ENCODE measurements at regions of chr12 and their contacts with region 1.

Region 1: DNA sequence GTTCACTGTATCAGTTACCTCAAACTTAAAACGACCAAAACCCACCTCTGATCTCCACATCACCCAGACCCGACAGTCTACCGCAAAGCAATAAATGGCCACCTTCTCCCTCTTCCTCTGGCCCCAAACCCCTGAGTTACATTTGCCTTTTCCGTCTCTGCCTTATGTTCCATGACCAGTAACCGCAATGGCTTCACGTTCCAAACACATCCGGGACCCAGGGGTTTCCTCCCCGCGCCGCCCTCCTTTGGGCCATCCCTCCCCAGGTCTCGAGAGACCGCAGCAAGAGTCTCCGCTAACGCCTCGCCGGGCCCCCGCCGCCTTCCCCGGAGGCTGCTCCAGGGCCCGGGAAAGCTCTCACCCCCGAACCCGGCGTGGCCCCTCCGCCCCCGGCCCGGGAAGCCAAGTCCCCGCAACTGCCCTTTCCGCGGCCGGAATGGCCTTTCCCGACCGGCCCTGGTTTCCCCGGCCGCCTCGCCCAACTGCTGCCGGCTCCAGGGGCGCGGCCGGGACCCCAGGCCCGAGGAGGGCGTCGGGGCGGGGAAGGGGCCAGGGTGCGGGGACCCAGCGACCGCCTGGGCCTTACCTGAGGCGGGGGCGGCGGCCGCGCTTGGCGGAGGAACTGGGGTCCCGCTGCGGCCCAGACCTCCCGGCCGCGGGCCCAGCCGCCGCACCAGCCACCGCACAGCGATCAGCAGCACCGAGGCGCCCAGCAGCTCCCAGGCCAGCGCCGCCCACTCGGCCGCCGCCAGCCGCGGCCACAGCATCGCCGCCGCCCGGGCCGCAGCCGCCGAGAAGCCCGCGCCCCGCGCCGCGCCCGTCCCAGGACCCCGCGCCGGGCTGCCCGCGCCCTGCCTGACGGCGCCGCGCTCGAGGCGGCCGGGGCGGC is at the start of gene ANKLE2:
- DNase-seq: peak; percentile 31 to 78 (median 56)
- ATAC-seq: peak; percentile 56
- H3K4me3 ChIP-seq: peak within 1 kb of the TSS; percentile 82
- H3K4me3 Mint-ChIP-seq: peak within 1 kb of the TSS; percentile 93
- H3K27ac ChIP-seq: peak within 1 kb of the TSS; percentile 84 to 86
- H3K27ac Mint-ChIP-seq: peak within 1 kb of the TSS; percentile 95
- H3K4me1 ChIP-seq: peaks cover 39% of the 10 kb centered on the region
- H3K4me1 Mint-ChIP-seq: peaks cover 36% of the 10 kb centered on the region
- H3K27me3 ChIP-seq: no peaks in the 10 kb centered on the region
- H3K27me3 Mint-ChIP-seq: no peaks in the 10 kb centered on the region
- CTCF ChIP-seq: no peak
- total RNA-seq, gene ANKLE2: 61.7 to 65.7 TPM

Region 2: GRCh38 chr12:132248453-132249167 is 512.7 kb before region 1 on chr12:
- CTCF ChIA-PET with region 1: no interaction called
- POLR2A ChIA-PET with region 1: no interaction called
- intact Hi-C with region 1: no loop called
- DNase-seq: no peak
- ATAC-seq: no peak
- H3K4me3 ChIP-seq: no peak overlapping the region
- H3K4me3 Mint-ChIP-seq: no peak overlapping the region
- H3K27ac ChIP-seq: no peak overlapping the region
- H3K27ac Mint-ChIP-seq: no peak overlapping the region
- H3K4me1 ChIP-seq: no peaks in the 10 kb centered on the region
- H3K4me1 Mint-ChIP-seq: peaks cover 4% of the 10 kb centered on the region
- H3K27me3 ChIP-seq: no peaks in the 10 kb centered on the region
- H3K27me3 Mint-ChIP-seq: peaks cover 11% of the 10 kb centered on the region
- CTCF ChIP-seq: no peak

Region 3: GRCh38 chr12:132687208-132688164 is 73.8 kb before region 1 on chr12 and contains the starts of genes POLE and PXMP2:
- CTCF ChIA-PET with region 1: no interaction called
- POLR2A ChIA-PET with region 1: no interaction called
- intact Hi-C with region 1: loop called (anchors 1 to 5 kb)
- DNase-seq: peak; percentile 88 to 97 (median 95)
- ATAC-seq: peak; percentile 94
- H3K4me3 ChIP-seq: peak within 1 kb of the TSS; percentile 48
- H3K4me3 Mint-ChIP-seq: peak within 1 kb of the TSS; percentile 91
- H3K27ac ChIP-seq: no peak within 1 kb of the TSS
- H3K27ac Mint-ChIP-seq: no peak within 1 kb of the TSS
- H3K4me1 ChIP-seq: peaks cover 22% of the 10 kb centered on the region
- H3K4me1 Mint-ChIP-seq: peaks cover 23% of the 10 kb centered on the region
- H3K27me3 ChIP-seq: no peaks in the 10 kb centered on the region
- H3K27me3 Mint-ChIP-seq: no peaks in the 10 kb centered on the region
- CTCF ChIP-seq: no peak
- total RNA-seq, gene POLE: 41.8 to 46.1 TPM
- total RNA-seq, gene PXMP2: 2.1 to 2.6 TPM

Region 4: GRCh38 chr12:132710422-132711168 is 50.7 kb before region 1 on chr12 and contains the start of gene PGAM5:
- CTCF ChIA-PET with region 1: no interaction called
- POLR2A ChIA-PET with region 1: interaction called, 9 read pairs
- intact Hi-C with region 1: loop called in 1 of 2 experiments (anchors 1 kb)
- DNase-seq: peak; percentile 83 to 99 (median 92)
- ATAC-seq: peak; percentile 97
- H3K4me3 ChIP-seq: peak within 1 kb of the TSS; percentile 81
- H3K4me3 Mint-ChIP-seq: peak within 1 kb of the TSS; percentile 93
- H3K27ac ChIP-seq: peak within 1 kb of the TSS; percentile 88 to 93
- H3K27ac Mint-ChIP-seq: peak within 1 kb of the TSS; percentile 92
- H3K4me1 ChIP-seq: peaks cover 34% of the 10 kb centered on the region
- H3K4me1 Mint-ChIP-seq: peaks cover 16% of the 10 kb centered on the region
- H3K27me3 ChIP-seq: no peaks in the 10 kb centered on the region
- H3K27me3 Mint-ChIP-seq: no peaks in the 10 kb centered on the region
- CTCF ChIP-seq: no peak
- total RNA-seq, gene PGAM5: 12.8 to 15.1 TPM

Region 5: DNA sequence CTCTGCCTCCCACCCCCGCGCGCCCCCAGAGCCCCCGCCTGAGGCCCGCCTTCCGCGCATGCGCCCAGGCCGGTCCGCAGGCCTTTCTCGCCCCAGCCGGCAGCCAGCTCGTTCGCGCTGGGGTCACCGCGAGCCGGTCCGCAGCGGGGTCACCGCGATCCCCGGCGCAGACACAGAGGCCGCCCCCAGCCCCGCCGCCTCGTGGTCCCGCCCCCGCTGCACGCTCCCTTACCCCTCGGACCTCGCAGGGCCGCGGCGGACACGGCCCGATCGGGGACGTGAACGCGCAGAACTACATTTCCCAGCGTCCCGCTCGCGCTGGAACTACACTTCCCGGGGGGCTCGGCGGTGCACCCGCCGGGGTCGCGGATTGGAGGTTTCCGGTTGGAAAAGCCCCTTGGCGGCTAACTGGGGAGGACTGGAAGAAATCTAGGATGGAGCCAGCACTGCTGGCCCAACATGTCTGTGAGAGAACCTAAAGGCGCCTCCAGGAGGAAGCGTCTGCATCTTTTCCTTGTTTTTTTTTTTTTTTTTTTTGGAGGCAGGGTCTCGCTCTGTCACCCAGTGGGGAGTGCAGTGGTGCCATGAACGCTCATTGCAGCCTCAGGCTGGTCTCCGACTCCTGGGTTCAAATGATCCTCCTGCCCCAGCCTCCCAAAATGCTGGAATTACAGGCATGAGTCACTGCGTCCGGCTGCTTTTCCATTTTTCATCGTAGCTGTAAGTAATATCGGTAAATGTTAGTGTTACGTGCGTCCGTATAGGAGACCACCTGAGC is 194.9 kb after region 1 on chr12 and contains the start of gene ZNF605:
- CTCF ChIA-PET with region 1: no interaction called
- POLR2A ChIA-PET with region 1: no interaction called
- intact Hi-C with region 1: loop called in 1 of 2 experiments (anchors 5 kb)
- DNase-seq: peak; percentile 63 to 94 (median 79)
- ATAC-seq: peak; percentile 95
- H3K4me3 ChIP-seq: peak within 1 kb of the TSS; percentile 78
- H3K4me3 Mint-ChIP-seq: peak within 1 kb of the TSS; percentile 98
- H3K27ac ChIP-seq: peak within 1 kb of the TSS; percentile 33 to 64
- H3K27ac Mint-ChIP-seq: peak within 1 kb of the TSS; percentile 89
- H3K4me1 ChIP-seq: peaks cover 23% of the 10 kb centered on the region
- H3K4me1 Mint-ChIP-seq: peaks cover 29% of the 10 kb centered on the region
- H3K27me3 ChIP-seq: no peaks in the 10 kb centered on the region
- H3K27me3 Mint-ChIP-seq: no peaks in the 10 kb centered on the region
- CTCF ChIP-seq: no peak
- total RNA-seq, gene ZNF605: 5.3 to 5.8 TPM